Activated CD8-positive, alpha-beta T cell treated with anti-CD3 and anti-CD28 coated beads, Interleukin-2, amount 10 ng/mL, durations not matched to agents 7 days and 5 days (primary cell): ENCODE measurements at regions of chr17 and their contacts with region 1.

Region 1: GRCh38 chr17:30104575-30105339 is 11.9 kb upstream of the NSRP1 start:
- DNase-seq: peak; percentile 82
- ATAC-seq: peak; percentile 98
- H3K4me3 Mint-ChIP-seq: peak overlapping the region; percentile 72
- H3K27ac Mint-ChIP-seq: no peak overlapping the region
- H3K4me1 Mint-ChIP-seq: peaks cover 6% of the 10 kb centered on the region
- H3K27me3 Mint-ChIP-seq: peaks cover 24% of the 10 kb centered on the region

Region 2: GRCh38 chr17:30093463-30094147 is 11.2 kb before region 1 on chr17:
- CTCF ChIA-PET with region 1: interaction called, 94 read pairs
- POLR2A ChIA-PET with region 1: no interaction called
- DNase-seq: peak; percentile 59
- ATAC-seq: peak; percentile 70
- H3K4me3 Mint-ChIP-seq: no peak overlapping the region
- H3K27ac Mint-ChIP-seq: no peak overlapping the region
- H3K4me1 Mint-ChIP-seq: peaks cover 7% of the 10 kb centered on the region
- H3K27me3 Mint-ChIP-seq: peaks cover 31% of the 10 kb centered on the region

Region 3: GRCh38 chr17:30124273-30124796 is 19.6 kb after region 1 on chr17:
- CTCF ChIA-PET with region 1: interaction called, 106 read pairs
- POLR2A ChIA-PET with region 1: interaction called, 4 read pairs
- DNase-seq: no peak
- ATAC-seq: no peak
- H3K4me3 Mint-ChIP-seq: no peak overlapping the region
- H3K27ac Mint-ChIP-seq: no peak overlapping the region
- H3K4me1 Mint-ChIP-seq: peaks cover 31% of the 10 kb centered on the region
- H3K27me3 Mint-ChIP-seq: no peaks in the 10 kb centered on the region

Region 4: GRCh38 chr17:30187573-30187972 is 82.8 kb after region 1 on chr17:
- CTCF ChIA-PET with region 1: no interaction called
- POLR2A ChIA-PET with region 1: no interaction called
- DNase-seq: no peak
- ATAC-seq: no peak
- H3K4me3 Mint-ChIP-seq: no peak overlapping the region
- H3K27ac Mint-ChIP-seq: no peak overlapping the region
- H3K4me1 Mint-ChIP-seq: no peaks in the 10 kb centered on the region
- H3K27me3 Mint-ChIP-seq: peaks cover 4% of the 10 kb centered on the region

Region 5: DNA sequence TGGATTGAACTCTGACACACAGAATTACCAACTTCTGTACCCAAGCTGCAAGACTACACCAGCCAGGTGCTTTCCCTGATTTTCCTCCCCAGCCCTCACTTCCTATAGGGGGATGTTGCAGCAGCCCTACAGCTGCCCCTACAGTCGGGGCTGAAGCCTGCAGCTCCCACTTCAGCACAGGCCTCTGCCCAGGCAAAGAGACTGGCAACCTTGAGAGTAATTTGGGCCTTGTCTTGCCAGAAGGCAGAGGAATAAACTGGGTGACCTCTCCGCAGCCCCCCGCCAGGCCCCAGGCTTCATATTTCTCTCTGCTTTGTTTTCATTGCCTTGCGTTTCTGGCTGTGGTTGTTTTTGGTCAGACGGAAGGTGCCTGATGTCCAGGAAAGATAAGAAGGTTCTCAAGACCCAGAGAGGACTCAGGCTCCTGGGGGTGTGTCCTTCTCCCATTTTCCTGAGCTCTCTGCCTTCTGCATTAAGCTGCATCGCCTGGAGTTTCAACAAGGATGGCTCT is 98.8 kb after region 1 on chr17:
- CTCF ChIA-PET with region 1: interaction called, 11 read pairs
- POLR2A ChIA-PET with region 1: no interaction called
- DNase-seq: no peak
- ATAC-seq: no peak
- H3K4me3 Mint-ChIP-seq: no peak overlapping the region
- H3K27ac Mint-ChIP-seq: no peak overlapping the region
- H3K4me1 Mint-ChIP-seq: no peaks in the 10 kb centered on the region
- H3K27me3 Mint-ChIP-seq: peaks cover 13% of the 10 kb centered on the region

Region 6: GRCh38 chr17:30252940-30253717 is 148.4 kb after region 1 on chr17:
- CTCF ChIA-PET with region 1: interaction called, 10 read pairs
- POLR2A ChIA-PET with region 1: no interaction called
- DNase-seq: no peak
- ATAC-seq: no peak
- H3K4me3 Mint-ChIP-seq: no peak overlapping the region
- H3K27ac Mint-ChIP-seq: no peak overlapping the region
- H3K4me1 Mint-ChIP-seq: peaks cover 2% of the 10 kb centered on the region
- H3K27me3 Mint-ChIP-seq: no peaks in the 10 kb centered on the region

Region 7: GRCh38 chr17:30323895-30324319 is 219.2 kb after region 1 on chr17:
- CTCF ChIA-PET with region 1: interaction called, 18 read pairs
- POLR2A ChIA-PET with region 1: no interaction called
- DNase-seq: peak; percentile 41
- ATAC-seq: peak; percentile 67
- H3K4me3 Mint-ChIP-seq: peak overlapping the region; percentile 34
- H3K27ac Mint-ChIP-seq: peak overlapping the region; percentile 35
- H3K4me1 Mint-ChIP-seq: peaks cover 26% of the 10 kb centered on the region
- H3K27me3 Mint-ChIP-seq: peaks cover 4% of the 10 kb centered on the region